Left lung (tissue), 14 donors: ENCODE measurements at regions of chr1 and their contacts with region 1.

Region 1: DNA sequence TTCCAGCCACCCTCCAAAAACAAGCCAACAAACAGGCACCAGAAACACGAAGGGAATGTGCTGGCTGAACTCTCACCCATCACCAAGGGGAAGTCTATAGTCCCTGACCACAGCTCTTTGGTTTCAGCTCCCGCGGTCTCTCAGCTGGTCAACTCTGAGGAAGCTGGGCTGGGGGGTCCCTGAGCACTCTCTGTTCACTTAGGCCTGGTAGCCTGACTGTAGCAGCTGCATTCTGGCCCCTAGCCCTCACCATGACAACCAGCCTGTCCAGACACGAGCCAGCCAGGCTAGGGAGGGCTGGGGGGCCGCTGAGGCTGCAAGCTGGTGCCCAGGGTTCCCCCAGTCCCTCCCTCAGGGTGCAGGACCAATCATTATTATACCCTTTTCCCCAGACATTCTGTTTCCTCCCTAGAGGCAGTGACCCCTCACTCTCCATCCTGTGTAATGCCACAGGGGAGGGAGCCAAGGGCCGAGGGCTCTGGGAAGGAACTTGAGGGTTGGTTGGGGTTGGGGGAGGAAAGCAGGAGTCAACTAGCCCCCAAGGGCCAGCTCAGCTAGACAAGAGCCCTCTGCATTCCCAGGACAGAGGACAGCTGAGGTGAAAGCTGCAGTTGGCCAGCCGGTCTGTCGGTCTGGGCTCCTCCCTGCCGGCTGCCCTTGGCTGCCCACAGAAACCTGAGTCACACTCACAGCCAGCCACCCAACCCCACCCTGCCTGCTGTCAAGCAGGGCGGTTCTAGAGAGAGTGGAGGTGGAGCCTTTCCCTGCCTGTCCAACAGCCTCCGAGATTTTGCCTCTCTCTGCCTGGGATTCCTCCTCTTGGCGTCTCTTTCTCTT is 1.2 kb upstream of the TRAPPC3 start:
- DNase-seq: peak in 3 of 4 donors; percentile 89 to 96 (median 96)
- ATAC-seq: peak; percentile 81
- H3K4me3 ChIP-seq: peak overlapping the region; percentile 0 to 20
- H3K27ac ChIP-seq: peak overlapping the region; percentile 98 to 99
- H3K4me1 ChIP-seq: peaks cover 35 to 73% of the 10 kb centered on the region in 2 donors
- H3K27me3 ChIP-seq: no peaks in the 10 kb centered on the region
- CTCF ChIP-seq: no peak

Region 2: DNA sequence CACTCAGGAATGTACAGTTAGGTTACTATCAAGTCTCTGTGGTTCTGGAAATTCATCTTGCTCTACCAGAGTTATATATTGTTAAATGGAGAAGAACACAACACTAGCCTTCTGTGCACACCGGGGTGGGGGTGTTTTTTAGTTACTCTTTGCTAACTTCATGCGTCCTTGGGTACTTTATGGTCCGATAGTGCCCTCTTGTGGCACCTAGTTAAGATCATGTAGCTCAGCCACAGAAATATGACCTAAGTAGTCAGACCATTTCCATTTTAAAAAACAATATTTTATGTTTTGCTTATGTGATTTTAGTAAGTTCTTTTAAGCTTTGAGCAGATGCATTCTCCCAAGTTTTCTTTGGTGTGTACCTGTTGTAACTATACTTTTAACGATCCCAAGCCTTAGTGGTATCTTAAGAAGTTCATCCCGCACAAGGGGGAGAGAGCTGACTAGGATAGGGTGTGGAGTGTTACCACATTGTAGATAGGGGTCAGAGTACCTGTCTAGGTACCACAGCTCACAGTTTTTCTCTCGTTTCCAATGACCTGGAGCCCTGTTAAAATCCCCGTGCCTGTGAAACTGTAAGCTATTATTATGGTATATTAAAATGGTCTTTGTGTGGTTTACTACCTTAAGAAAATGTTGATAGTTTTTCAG is 135.1 kb after region 1 on chr1:
- intact Hi-C with region 1: loop called in 1 of 2 experiments (anchors 10 kb)
- DNase-seq: peak in 2 of 4 donors; percentile 69 to 89
- ATAC-seq: peak; percentile 94
- H3K4me3 ChIP-seq: no peak overlapping the region
- H3K27ac ChIP-seq: no peak overlapping the region
- H3K4me1 ChIP-seq: peaks cover 0 to 10% of the 10 kb centered on the region in 2 donors
- H3K27me3 ChIP-seq: no peaks in the 10 kb centered on the region
- CTCF ChIP-seq: peak; percentile 60 to 68